ENCODE measurements at regions of chr22 and their contacts with region 1.

Region 1: GRCh38 chr22:30444632-30445437 is 19.3 kb downstream of the MTFP1 start:
- DNase-seq: peak; percentile 25 to 54 (median 44)
- H3K4me3 ChIP-seq: no peak overlapping the region
- H3K4me3 Mint-ChIP-seq: no peak overlapping the region
- H3K27ac ChIP-seq: no peak overlapping the region
- H3K27ac Mint-ChIP-seq: peak overlapping the region in 2 of 7 donors; percentile 1 to 74
- H3K4me1 ChIP-seq: peaks cover 12 to 15% of the 10 kb centered on the region in 2 donors
- H3K4me1 Mint-ChIP-seq: peaks cover 29% of the 10 kb centered on the region
- H3K27me3 ChIP-seq: peaks cover 16 to 48% of the 10 kb centered on the region in 2 donors
- H3K27me3 Mint-ChIP-seq: peaks cover 58 to 71% (median 66%) of the 10 kb centered on the region in 3 donors
- CTCF ChIP-seq: peak; percentile 93

Region 2: GRCh38 chr22:30270832-30271231 is 174.0 kb before region 1 on chr22:
- intact Hi-C with region 1: loop called in 1 of 2 experiments (anchors 5 kb)
- DNase-seq: peak; percentile 99 to 100 (median 99)
- H3K4me3 ChIP-seq: peak overlapping the region in 1 of 3 experiments; percentile 40
- H3K4me3 Mint-ChIP-seq: peak overlapping the region; percentile 68 to 79
- H3K27ac ChIP-seq: peak overlapping the region; percentile 82 to 89
- H3K27ac Mint-ChIP-seq: peak overlapping the region; percentile 92 to 99 (median 99)
- H3K4me1 ChIP-seq: peaks cover 80 to 99% of the 10 kb centered on the region in 2 donors
- H3K4me1 Mint-ChIP-seq: peaks cover 90% of the 10 kb centered on the region
- H3K27me3 ChIP-seq: peaks cover 0 to 6% of the 10 kb centered on the region in 2 donors
- H3K27me3 Mint-ChIP-seq: peaks cover 9 to 27% (median 20%) of the 10 kb centered on the region in 3 donors
- CTCF ChIP-seq: no peak

Region 3: GRCh38 chr22:30408414-30409104 is 36.3 kb before region 1 on chr22:
- intact Hi-C with region 1: no loop called
- DNase-seq: no peak
- H3K4me3 ChIP-seq: no peak overlapping the region
- H3K4me3 Mint-ChIP-seq: no peak overlapping the region
- H3K27ac ChIP-seq: no peak overlapping the region
- H3K27ac Mint-ChIP-seq: no peak overlapping the region
- H3K4me1 ChIP-seq: no peaks in the 10 kb centered on the region
- H3K4me1 Mint-ChIP-seq: no peaks in the 10 kb centered on the region
- H3K27me3 ChIP-seq: no peaks in the 10 kb centered on the region
- H3K27me3 Mint-ChIP-seq: peaks cover 0 to 6% (median 6%) of the 10 kb centered on the region in 3 donors
- CTCF ChIP-seq: no peak

Region 4: GRCh38 chr22:30423982-30424963 is 20.6 kb before region 1 on chr22:
- intact Hi-C with region 1: loop called in 1 of 2 experiments (anchors 2 kb)
- DNase-seq: peak; percentile 99 to 100 (median 99)
- H3K4me3 ChIP-seq: peak overlapping the region; percentile 54 to 88 (median 78)
- H3K4me3 Mint-ChIP-seq: peak overlapping the region; percentile 92 to 96
- H3K27ac ChIP-seq: peak overlapping the region; percentile 81 to 97
- H3K27ac Mint-ChIP-seq: peak overlapping the region; percentile 93 to 98 (median 97)
- H3K4me1 ChIP-seq: peaks cover 40 to 46% of the 10 kb centered on the region in 2 donors
- H3K4me1 Mint-ChIP-seq: peaks cover 40% of the 10 kb centered on the region
- H3K27me3 ChIP-seq: no peaks in the 10 kb centered on the region
- H3K27me3 Mint-ChIP-seq: peaks cover 0 to 2% (median 0%) of the 10 kb centered on the region in 3 donors
- CTCF ChIP-seq: no peak

Region 5: DNA sequence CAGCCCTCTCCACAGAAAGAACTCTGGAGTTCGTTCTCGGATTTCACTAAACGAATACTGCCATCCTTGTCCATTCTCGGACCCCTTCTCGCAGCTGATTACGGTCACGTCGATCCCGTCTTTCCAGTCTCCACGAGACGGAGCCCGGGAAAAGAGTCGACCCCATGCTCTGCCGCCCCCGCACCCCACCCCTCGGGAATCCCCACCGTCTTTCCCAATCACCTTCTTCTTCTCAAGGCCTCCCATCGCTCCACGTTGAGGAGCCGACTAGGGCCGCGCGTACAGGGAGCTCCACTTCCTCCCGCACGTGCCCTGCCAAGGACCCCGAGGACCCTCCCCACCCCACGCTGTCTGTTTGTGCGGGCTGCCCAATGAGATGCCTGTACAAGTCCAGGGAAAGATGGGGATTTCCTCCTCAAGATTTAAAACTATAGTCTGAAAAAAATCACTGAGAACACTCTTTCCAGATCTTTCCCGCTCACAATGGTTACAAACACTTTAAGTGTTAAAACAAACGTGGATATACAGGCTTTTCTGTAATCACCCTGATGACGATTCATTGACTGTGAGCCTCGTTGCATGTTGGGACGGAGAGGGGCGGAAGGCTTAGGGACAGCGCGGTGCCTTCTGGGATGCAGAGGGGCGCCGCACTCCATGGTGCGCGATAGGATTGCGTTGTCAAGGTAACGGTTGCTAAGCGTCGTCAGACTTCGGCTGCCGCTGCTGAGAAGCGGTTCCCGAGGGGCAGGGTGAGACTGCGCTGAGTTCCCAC is 146.9 kb after region 1 on chr22 and contains the start of gene PES1:
- intact Hi-C with region 1: loop called in 1 of 2 experiments (anchors 10 kb)
- DNase-seq: peak; percentile 98 to 100 (median 99)
- H3K4me3 ChIP-seq: peak within 1 kb of the TSS; percentile 44 to 85 (median 84)
- H3K4me3 Mint-ChIP-seq: no peak within 1 kb of the TSS
- H3K27ac ChIP-seq: peak within 1 kb of the TSS; percentile 44 to 93
- H3K27ac Mint-ChIP-seq: no peak within 1 kb of the TSS
- H3K4me1 ChIP-seq: peaks cover 11 to 20% of the 10 kb centered on the region in 2 donors
- H3K4me1 Mint-ChIP-seq: peaks cover 5% of the 10 kb centered on the region
- H3K27me3 ChIP-seq: no peaks in the 10 kb centered on the region
- H3K27me3 Mint-ChIP-seq: peaks cover 7 to 9% (median 8%) of the 10 kb centered on the region in 3 donors
- CTCF ChIP-seq: no peak
- polyA plus RNA-seq, gene PES1: 32.2 to 36.6 (median 35.6) TPM

Measured in CD14-positive monocyte (primary cell).